ENCODE measurements at regions of chr1 and their contacts with region 1.

Region 1: DNA sequence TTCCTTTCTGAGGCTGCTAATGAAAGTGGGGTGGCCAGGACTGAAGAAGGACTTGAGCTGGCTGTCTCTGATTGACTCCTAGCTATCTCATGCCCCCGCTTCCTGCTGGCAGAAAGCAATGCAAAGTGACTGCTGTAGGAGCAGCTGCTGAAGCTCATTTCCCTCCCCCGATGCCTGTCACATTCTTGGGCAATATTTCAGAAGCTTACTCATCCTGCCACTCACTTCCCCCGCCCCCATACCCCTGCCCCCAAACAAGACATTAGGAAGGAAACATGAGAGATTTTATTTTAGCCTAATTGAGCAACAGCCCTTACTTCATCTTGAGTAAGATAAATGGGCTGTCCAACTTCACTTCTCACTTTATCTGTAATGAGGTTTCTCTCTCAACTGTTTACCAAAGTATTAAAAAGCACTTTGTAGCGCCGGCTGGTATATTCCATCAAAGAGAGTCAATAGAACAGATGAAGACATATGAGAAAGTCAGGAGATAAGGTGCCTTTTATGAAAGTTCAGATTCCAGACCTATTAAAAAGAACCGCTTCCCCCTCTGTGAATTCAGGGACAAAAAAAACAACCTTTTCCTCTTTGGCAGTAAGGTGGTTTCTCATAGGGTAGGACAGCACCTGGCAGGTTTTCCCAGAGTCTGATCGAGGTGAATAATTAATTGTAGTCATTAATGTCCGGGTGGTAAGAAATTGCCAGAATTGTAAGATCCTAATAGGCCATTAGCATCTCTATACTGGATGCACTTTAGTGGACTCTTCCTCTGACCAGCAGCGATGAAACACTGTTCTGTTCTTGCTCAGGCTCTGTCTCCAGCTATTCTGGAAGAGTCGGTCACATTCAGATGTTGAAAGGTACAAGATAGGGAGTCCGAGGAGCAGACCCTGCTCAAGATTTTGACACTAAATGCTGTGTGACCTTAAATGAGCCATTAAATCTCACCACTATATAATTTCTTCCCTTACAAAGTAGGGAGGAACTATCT is 70.2 kb downstream of the SH3GLB1 start:
- DNase-seq: no peak
- ATAC-seq: peak; percentile 91
- H3K4me3 Mint-ChIP-seq: peak overlapping the region; percentile 55
- H3K27ac Mint-ChIP-seq: peak overlapping the region; percentile 69
- H3K4me1 Mint-ChIP-seq: peaks cover 19% of the 10 kb centered on the region
- H3K27me3 Mint-ChIP-seq: no peaks in the 10 kb centered on the region
- CTCF ChIP-seq: no peak

Region 2: DNA sequence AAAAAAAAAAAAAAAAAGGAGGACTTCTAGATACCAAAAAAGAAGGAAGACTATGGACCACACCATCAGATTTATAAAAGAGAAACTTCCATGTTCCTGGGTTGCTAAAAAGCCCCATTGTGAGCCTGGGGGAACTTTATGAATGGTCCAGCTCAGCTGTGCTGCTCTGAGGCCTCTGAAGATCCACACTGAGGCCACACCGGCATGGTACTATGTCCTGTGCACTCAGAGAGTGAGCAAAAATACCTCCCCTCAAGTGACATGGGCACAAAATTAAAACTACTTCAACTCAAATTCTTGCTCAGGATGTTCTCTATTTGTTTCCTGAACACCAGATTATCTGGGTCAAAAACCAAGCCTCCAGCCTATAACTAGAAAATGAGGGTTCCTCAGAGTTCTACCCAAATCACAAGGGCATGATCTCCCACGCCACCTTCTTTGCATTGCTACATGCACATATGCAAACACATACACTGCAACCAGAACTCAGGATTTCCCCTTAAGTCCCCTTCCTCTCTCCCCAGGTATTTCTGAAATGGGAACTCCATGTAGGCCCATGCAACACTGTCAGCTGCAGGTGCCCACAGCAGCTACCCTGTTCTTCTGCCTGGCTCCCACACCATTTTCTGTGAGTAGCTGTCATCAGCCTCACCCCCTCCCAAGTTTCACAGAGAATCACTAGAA is 24.1 kb after region 1 on chr1:
- CTCF ChIA-PET with region 1: no interaction called
- POLR2A ChIA-PET with region 1: interaction called, 11 read pairs
- intact Hi-C with region 1: no loop called
- DNase-seq: no peak
- ATAC-seq: peak; percentile 86
- H3K4me3 Mint-ChIP-seq: peak overlapping the region; percentile 69
- H3K27ac Mint-ChIP-seq: peak overlapping the region; percentile 86
- H3K4me1 Mint-ChIP-seq: peaks cover 29% of the 10 kb centered on the region
- H3K27me3 Mint-ChIP-seq: no peaks in the 10 kb centered on the region
- CTCF ChIP-seq: no peak